GM13976 (cell line): ENCODE measurements at regions of chr13 and their contacts with region 1.

Region 1: DNA sequence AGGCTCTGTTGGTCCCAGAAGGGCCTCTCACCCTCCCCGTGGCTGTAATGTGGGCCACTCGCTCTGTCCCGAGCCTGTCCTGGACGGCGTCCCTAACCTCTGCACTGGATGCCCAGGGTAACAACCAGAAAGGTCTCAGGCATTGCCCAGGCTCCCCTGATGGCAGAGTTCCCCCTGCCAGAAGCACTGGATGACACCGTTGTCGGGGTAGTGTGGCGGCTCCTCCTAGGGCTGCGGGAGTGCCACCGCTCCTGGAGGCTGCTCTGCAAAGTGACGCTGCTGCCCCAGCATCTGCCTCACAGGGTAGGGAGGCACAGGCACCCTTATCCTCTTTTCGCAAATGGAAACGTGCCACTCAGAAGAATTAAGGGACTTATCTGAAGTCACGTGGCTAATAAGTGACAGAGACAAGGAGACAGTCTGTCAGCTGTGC is 32.0 kb downstream of the MPHOSPH8 start:
- DNase-seq: no peak
- CTCF ChIP-seq: no peak

Region 2: GRCh38 chr13:19071161-19071936 is 594.1 kb before region 1 on chr13:
- in situ Hi-C with region 1: no loop called
- DNase-seq: no peak
- CTCF ChIP-seq: no peak

Region 3: GRCh38 chr13:19305434-19305833 is 360.0 kb before region 1 on chr13:
- in situ Hi-C with region 1: no loop called
- DNase-seq: no peak
- CTCF ChIP-seq: no peak

Region 4: DNA sequence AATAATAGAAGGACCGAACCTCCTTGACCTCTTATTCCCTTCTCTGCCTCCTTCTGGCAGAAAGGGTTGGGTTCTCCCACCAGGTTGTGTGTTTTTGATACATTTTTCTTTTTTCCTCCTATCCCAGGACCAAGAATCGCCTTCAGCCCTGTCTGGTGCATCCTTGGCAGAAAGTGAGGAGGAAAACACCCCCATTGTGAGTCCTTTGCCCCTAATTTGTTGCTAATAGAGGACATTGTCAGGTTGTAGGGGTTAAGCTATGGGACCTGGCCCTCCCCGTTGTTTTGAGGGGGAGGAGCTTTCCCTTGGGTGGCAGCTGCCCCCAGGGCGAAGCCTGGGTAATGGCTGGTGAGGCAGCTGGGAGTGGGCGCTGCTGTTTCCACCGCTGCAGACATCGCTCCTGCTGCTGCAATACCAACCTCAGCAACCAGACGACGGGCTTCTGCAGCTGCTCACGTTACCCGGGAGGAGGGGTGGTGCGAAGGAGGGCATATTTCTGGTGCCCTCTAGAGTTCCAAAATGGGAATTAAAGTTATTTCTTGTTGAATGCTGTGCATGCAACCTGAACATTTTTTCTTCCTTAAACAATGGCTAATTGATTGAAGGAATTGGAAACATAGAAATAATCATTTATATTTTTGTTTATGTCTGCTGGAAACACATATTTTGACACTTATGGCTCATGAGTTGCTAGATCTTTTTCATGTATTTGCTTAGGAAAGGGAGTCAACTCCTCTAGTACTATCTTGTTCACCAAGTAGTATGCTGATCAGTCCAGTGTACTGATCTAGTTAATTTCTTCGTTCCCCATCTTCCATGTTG is 294.6 kb after region 1 on chr13:
- in situ Hi-C with region 1: loop called (anchors 25 kb)
- DNase-seq: peak; percentile 67
- CTCF ChIP-seq: peak; percentile 59